ENCODE measurements at regions of chr9 and their contacts with region 1.

Region 1: GRCh38 chr9:93950619-93951601 is 4.2 kb downstream of the BARX1 start:
- DNase-seq: no peak
- H3K4me3 ChIP-seq: peak overlapping the region; percentile 60
- H3K4me3 Mint-ChIP-seq: peak overlapping the region; percentile 65 to 90 (median 77)
- H3K27ac ChIP-seq: no peak overlapping the region
- H3K27ac Mint-ChIP-seq: peak overlapping the region in 2 of 8 donors; percentile 11 to 70
- H3K4me1 ChIP-seq: peaks cover 26% of the 10 kb centered on the region
- H3K4me1 Mint-ChIP-seq: peaks cover 38 to 57% (median 45%) of the 10 kb centered on the region in 3 donors
- H3K27me3 ChIP-seq: peaks cover 66% of the 10 kb centered on the region
- H3K27me3 Mint-ChIP-seq: peaks cover 66 to 69% of the 10 kb centered on the region in 2 donors

Region 2: GRCh38 chr9:93962561-93963440 is 11.9 kb after region 1 on chr9:
- CTCF ChIA-PET with region 1: interaction called, 16 read pairs
- POLR2A ChIA-PET with region 1: no interaction called
- DNase-seq: peak; percentile 61 to 82 (median 65)
- H3K4me3 ChIP-seq: no peak overlapping the region
- H3K4me3 Mint-ChIP-seq: peak overlapping the region in 1 of 7 donors; percentile 7
- H3K27ac ChIP-seq: no peak overlapping the region
- H3K27ac Mint-ChIP-seq: no peak overlapping the region
- H3K4me1 ChIP-seq: peaks cover 26% of the 10 kb centered on the region
- H3K4me1 Mint-ChIP-seq: peaks cover 15 to 32% (median 28%) of the 10 kb centered on the region in 3 donors
- H3K27me3 ChIP-seq: peaks cover 32% of the 10 kb centered on the region
- H3K27me3 Mint-ChIP-seq: peaks cover 34 to 68% of the 10 kb centered on the region in 2 donors